Endothelial cell of umbilical vein (primary cell): ENCODE measurements at regions of chr5 and their contacts with region 1.

Region 1: DNA sequence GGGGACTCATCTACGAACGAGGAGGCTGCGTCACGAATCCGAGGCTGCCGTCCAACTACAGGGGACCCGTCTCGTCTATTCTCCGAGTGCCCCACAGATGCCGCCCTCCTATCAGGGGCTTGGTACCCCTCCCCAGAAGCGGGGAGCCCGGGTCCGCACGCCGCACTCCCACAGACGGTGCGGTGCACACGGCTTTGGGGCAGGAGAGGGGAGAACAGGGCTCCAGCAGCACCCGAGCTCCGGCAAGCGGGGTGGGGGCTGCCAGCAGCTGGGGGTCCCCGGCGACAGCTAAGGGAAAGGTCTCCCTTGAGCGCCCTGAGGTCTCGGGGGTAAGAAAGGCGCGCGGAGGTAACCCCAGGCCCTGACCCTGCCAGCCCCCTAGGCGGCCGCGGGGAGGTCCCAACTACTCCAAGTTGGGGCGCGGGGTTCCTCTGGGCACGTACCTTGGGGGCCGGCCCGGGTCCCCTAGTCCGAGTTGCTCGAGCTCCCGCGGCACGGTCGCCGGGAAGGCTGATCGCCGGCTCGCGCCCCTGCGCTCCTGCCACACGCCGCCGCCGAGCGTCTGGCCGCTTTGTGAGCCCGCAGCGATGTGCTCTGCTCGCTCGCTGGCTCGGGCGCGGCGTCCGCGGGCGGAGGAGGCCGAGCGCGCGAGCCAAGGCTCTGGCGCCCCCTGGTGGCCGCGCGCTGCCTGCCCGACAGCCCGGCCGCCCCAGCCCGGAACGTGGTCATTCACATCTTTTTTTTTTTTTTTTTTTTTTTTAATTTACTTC is at the start of gene SPOCK1:
- DNase-seq: peak; percentile 81
- H3K4me3 ChIP-seq: peak within 1 kb of the TSS; percentile 54 to 93 (median 56)
- H3K27ac ChIP-seq: peak within 1 kb of the TSS; percentile 39
- H3K4me1 ChIP-seq: peaks cover 20% of the 10 kb centered on the region
- H3K27me3 ChIP-seq: peaks cover 10 to 13% of the 10 kb centered on the region in 2 experiments
- CTCF ChIP-seq: peak; percentile 62 to 81
- POLR2A ChIP-seq: peak; percentile 70
- total RNA-seq, gene SPOCK1: 280 and 404 TPM in 2 replicates

Region 2: DNA sequence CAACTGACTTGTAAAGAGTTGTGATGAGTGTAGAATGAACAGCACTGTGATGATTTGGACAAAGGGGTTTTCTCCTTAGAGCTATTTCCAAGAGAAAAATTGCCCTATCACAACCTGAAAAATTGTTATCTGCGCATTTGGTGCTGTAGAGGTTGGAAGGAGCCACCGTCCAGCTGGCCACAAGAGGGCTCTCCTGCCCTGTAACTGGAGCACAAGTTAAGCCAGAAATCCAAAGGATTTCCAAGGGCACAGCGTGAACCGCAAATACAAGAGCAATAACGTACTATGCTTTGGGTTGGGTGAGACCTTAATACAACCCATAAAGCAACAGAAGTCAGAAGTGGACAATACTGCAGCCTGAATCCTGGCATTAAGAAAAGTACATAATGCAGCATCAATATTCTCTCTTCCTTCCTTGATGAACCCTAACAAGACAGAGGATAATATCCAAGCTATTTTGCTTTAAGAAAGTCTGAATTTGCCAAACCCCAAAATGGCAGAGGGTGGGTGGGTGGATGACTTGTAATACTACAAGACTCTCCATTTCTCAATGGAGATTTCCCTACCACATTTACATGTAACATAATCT is 1249.1 kb before region 1 on chr5:
- CTCF ChIA-PET with region 1: no interaction called
- POLR2A ChIA-PET with region 1: no interaction called
- dilution Hi-C with region 1: no loop called
- intact Hi-C with region 1: loop called (anchors 1 kb)
- DNase-seq: peak; percentile 64
- H3K4me3 ChIP-seq: no peak overlapping the region
- H3K27ac ChIP-seq: no peak overlapping the region
- H3K4me1 ChIP-seq: no peaks in the 10 kb centered on the region
- H3K27me3 ChIP-seq: peaks cover 5 to 13% of the 10 kb centered on the region in 2 experiments
- CTCF ChIP-seq: peak; percentile 84 to 87
- POLR2A ChIP-seq: no peak

Region 3: GRCh38 chr5:137075163-137075970 is 423.6 kb before region 1 on chr5:
- CTCF ChIA-PET with region 1: no interaction called
- POLR2A ChIA-PET with region 1: no interaction called
- dilution Hi-C with region 1: no loop called
- intact Hi-C with region 1: loop called (anchors 2 kb)
- DNase-seq: peak; percentile 33
- H3K4me3 ChIP-seq: no peak overlapping the region
- H3K27ac ChIP-seq: no peak overlapping the region
- H3K4me1 ChIP-seq: peaks cover 27% of the 10 kb centered on the region
- H3K27me3 ChIP-seq: no peaks in the 10 kb centered on the region
- CTCF ChIP-seq: peak; percentile 53 to 65
- POLR2A ChIP-seq: no peak

Region 4: GRCh38 chr5:137344723-137345322 is 154.1 kb before region 1 on chr5:
- CTCF ChIA-PET with region 1: interaction called, 142 read pairs
- POLR2A ChIA-PET with region 1: no interaction called
- dilution Hi-C with region 1: no loop called
- intact Hi-C with region 1: loop called (anchors 1 kb)
- DNase-seq: peak; percentile 76
- H3K4me3 ChIP-seq: no peak overlapping the region
- H3K27ac ChIP-seq: peak overlapping the region; percentile 7
- H3K4me1 ChIP-seq: peaks cover 55% of the 10 kb centered on the region
- H3K27me3 ChIP-seq: no peaks in the 10 kb centered on the region
- CTCF ChIP-seq: peak; percentile 73 to 85
- POLR2A ChIP-seq: no peak

Region 5: GRCh38 chr5:137470111-137470920 is 28.6 kb before region 1 on chr5:
- CTCF ChIA-PET with region 1: interaction called, 3 read pairs
- POLR2A ChIA-PET with region 1: no interaction called
- dilution Hi-C with region 1: no loop called
- intact Hi-C with region 1: loop called (anchors 2 kb)
- DNase-seq: peak; percentile 88
- H3K4me3 ChIP-seq: no peak overlapping the region
- H3K27ac ChIP-seq: peak overlapping the region; percentile 78
- H3K4me1 ChIP-seq: peaks cover 31% of the 10 kb centered on the region
- H3K27me3 ChIP-seq: no peaks in the 10 kb centered on the region
- CTCF ChIP-seq: no peak
- POLR2A ChIP-seq: peak; percentile 33

Region 6: GRCh38 chr5:137481596-137481995 is 17.3 kb before region 1 on chr5:
- CTCF ChIA-PET with region 1: no interaction called
- POLR2A ChIA-PET with region 1: no interaction called
- dilution Hi-C with region 1: no loop called
- intact Hi-C with region 1: no loop called
- DNase-seq: no peak
- H3K4me3 ChIP-seq: no peak overlapping the region
- H3K27ac ChIP-seq: no peak overlapping the region
- H3K4me1 ChIP-seq: peaks cover 6% of the 10 kb centered on the region
- H3K27me3 ChIP-seq: no peaks in the 10 kb centered on the region
- CTCF ChIP-seq: no peak
- POLR2A ChIP-seq: no peak

Region 7: DNA sequence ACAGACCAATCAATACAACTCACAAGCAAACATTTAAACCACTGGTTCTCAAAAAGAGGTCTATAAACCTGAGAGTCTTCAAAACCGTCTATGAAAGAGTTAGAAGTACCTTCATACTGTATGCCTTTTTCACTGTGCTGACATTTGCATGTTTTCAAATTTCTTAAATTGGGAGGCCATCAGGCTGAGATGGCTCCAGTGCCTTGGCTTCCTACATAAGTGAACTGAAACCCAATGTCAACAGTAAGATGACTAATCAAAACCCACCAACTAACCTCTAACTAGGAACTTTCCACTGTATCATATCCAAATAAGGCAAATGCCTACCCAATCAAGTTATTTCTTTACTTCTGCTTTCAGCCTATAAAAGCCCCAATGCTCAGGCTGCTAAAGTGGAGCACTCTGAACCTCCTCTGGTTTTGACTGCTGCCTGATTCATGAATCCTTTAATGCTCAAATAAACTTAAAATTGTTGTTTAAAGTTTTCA is 498.8 kb after region 1 on chr5:
- CTCF ChIA-PET with region 1: no interaction called
- POLR2A ChIA-PET with region 1: no interaction called
- dilution Hi-C with region 1: no loop called
- intact Hi-C with region 1: no loop called
- DNase-seq: peak; percentile 6
- H3K4me3 ChIP-seq: no peak overlapping the region
- H3K27ac ChIP-seq: no peak overlapping the region
- H3K4me1 ChIP-seq: peaks cover 16% of the 10 kb centered on the region
- H3K27me3 ChIP-seq: no peaks in the 10 kb centered on the region
- CTCF ChIP-seq: no peak
- POLR2A ChIP-seq: no peak